Colonic mucosa (tissue), 4 donors: ENCODE measurements at regions of chr13 and their contacts with region 1.

Region 1: GRCh38 chr13:33931397-33932311 is 113.7 kb downstream of the RFC3 start:
- DNase-seq: no peak
- H3K4me3 ChIP-seq: no peak overlapping the region
- H3K27ac ChIP-seq: no peak overlapping the region
- H3K4me1 ChIP-seq: no peaks in the 10 kb centered on the region
- H3K27me3 ChIP-seq: no peaks in the 10 kb centered on the region
- CTCF ChIP-seq: peak; percentile 31

Region 2: DNA sequence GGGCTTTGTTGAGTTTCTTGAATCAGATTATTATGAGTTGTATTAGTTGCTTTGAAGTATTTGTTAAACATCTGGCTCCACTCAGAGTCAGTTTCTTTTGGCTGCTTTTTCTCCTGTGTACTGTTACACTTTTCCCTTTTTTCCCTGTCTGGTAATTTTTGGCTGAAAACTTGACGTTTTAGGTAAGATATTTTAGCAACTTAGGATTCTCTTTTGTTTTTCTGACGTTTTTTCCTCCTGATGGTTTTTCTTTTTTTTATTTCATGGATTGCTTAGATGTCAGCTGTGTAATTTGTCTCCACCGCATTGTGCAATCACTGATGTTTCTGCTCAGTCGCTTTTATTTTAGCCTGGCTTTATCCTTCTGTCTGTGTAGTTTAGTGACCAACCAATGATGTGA is 93.0 kb before region 1 on chr13:
- intact Hi-C with region 1: no loop called
- DNase-seq: no peak
- H3K4me3 ChIP-seq: no peak overlapping the region
- H3K27ac ChIP-seq: no peak overlapping the region
- H3K4me1 ChIP-seq: no peaks in the 10 kb centered on the region
- H3K27me3 ChIP-seq: no peaks in the 10 kb centered on the region
- CTCF ChIP-seq: no peak

Region 3: DNA sequence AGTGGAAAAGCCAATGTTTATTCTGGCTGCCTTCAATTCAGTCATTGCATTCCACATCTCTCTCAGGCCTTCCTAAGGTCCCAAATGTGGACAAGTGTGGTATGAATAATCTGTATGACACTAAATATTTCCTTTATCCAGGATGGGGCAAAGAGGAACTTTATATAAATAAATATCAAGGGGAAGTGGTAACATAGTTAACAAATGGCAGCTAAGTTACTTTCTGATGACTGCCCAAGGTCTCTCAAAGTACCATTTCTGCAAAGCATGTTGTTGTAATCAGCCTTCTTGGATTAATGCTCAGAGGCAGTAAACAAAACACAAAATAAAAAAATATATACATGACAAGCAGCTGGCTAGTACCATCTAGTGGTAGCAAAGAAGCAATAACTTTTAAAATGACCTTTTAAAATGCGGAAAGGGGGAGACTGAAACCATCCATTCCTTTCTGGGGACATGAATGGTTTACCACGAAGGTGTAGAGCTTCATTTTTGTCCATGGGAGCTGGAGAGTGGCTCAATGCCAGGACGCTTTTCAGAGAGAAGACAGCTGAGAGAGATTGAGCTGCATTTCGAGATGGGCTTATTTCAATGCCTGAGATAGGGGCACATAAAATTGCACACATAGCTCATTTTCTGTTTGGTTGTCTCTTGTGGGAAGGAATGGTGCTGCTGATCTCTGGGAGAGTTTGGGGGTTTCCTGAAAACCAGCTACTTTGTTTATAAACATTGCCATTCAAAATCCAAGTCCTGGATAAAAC is 145.5 kb after region 1 on chr13:
- intact Hi-C with region 1: loop called (anchors 5 kb)
- DNase-seq: no peak
- H3K4me3 ChIP-seq: no peak overlapping the region
- H3K27ac ChIP-seq: no peak overlapping the region
- H3K4me1 ChIP-seq: no peaks in the 10 kb centered on the region
- H3K27me3 ChIP-seq: no peaks in the 10 kb centered on the region
- CTCF ChIP-seq: no peak

Region 4: DNA sequence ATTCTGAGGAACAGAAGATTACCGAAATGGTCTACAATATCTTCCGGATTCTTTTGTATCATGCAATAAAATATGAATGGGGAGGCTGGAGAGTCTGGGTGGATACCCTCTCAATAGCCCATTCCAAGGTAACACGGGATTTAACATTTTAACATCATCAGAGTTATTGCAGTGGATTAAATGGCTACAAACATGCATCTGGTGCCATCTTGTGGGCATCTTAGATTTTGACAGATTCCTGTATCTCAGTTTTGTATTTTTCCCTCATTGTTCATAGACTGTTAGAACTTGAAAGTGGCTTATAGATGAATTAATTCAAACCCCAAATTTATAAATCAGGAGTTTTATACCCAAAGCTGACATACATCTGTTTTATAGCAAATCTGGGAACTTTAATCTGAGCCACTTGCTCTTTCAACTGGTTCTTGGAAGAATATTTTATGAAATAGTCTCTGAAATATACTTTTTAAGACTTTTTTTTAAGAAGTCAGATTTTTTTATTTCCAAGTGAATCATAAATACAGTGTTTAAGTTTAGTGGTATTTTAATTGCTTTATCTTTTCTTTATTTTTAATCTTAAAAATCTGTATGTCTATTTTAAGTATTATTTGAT is 1225.6 kb after region 1 on chr13:
- intact Hi-C with region 1: loop called (anchors 2 kb)
- DNase-seq: peak; percentile 47
- H3K4me3 ChIP-seq: no peak overlapping the region
- H3K27ac ChIP-seq: no peak overlapping the region
- H3K4me1 ChIP-seq: no peaks in the 10 kb centered on the region
- H3K27me3 ChIP-seq: no peaks in the 10 kb centered on the region
- CTCF ChIP-seq: peak; percentile 54